Spleen (tissue), 13 donors: ENCODE measurements at regions of chr6 and their contacts with region 1.

Region 1: DNA sequence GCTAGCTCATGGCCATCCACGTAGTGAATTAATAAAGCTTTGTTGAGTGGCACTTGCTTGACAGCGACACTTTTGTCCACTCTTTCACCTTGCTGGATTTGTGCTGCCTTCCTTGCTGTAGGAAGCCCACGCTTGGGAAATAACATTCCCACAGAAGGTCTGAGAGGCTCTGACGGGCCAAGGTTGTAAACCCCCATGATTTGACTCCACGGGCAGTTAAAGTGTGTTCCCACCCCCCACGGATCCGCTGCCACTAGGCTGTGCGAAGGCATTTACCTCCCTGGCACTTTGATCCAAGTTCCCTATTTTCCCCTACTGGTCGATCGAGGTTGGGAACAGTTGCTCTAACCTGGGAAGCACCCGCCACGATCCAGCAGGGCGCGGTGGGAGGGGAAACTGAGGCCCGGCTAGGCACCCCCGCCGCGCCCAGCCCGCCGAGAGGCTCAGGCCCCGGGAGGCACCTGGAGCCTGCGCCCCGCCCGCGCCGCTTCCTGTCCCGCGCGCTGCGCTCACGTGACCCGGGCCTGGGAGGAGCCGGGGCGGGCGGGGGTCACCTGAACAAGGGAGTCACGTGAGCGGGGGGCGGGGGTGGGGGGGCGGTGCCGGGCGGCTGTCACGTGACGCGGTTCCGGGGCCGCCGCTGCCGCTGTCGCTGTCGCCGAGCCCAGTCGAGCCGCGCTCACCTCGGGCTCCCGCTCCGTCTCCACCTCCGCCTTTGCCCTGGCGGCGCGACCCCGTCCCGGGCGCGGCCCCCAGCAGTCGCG is at the start of gene IGF2R:
- DNase-seq: peak; percentile 99
- H3K4me3 ChIP-seq: peak within 1 kb of the TSS; percentile 68 to 98 (median 90)
- H3K27ac ChIP-seq: peak within 1 kb of the TSS; percentile 87 to 98 (median 94)
- H3K4me1 ChIP-seq: peaks cover 26 to 73% (median 47%) of the 10 kb centered on the region in 6 donors
- H3K27me3 ChIP-seq: no peaks in the 10 kb centered on the region
- CTCF ChIP-seq: peak in 2 of 11 experiments; percentile 31 to 40
- POLR2A ChIP-seq: peak in 1 of 3 donors; percentile 76
- total RNA-seq, gene IGF2R: 110 to 193 (median 164) TPM

Region 2: GRCh38 chr6:159789377-159790148 is 179.1 kb before region 1 on chr6 and contains the start of gene TCP1:
- intact Hi-C with region 1: loop called (anchors 10 kb)
- DNase-seq: peak; percentile 99
- H3K4me3 ChIP-seq: peak within 1 kb of the TSS; percentile 88 to 98 (median 93)
- H3K27ac ChIP-seq: peak within 1 kb of the TSS; percentile 85 to 99 (median 97)
- H3K4me1 ChIP-seq: peaks cover 28 to 84% (median 62%) of the 10 kb centered on the region in 6 donors
- H3K27me3 ChIP-seq: no peaks in the 10 kb centered on the region
- CTCF ChIP-seq: peak in 3 of 11 experiments; percentile 5 to 26 (median 17)
- POLR2A ChIP-seq: peak in 2 of 3 donors; percentile 81 to 93
- total RNA-seq, gene TCP1: 94.1 to 136 (median 119) TPM

Region 3: DNA sequence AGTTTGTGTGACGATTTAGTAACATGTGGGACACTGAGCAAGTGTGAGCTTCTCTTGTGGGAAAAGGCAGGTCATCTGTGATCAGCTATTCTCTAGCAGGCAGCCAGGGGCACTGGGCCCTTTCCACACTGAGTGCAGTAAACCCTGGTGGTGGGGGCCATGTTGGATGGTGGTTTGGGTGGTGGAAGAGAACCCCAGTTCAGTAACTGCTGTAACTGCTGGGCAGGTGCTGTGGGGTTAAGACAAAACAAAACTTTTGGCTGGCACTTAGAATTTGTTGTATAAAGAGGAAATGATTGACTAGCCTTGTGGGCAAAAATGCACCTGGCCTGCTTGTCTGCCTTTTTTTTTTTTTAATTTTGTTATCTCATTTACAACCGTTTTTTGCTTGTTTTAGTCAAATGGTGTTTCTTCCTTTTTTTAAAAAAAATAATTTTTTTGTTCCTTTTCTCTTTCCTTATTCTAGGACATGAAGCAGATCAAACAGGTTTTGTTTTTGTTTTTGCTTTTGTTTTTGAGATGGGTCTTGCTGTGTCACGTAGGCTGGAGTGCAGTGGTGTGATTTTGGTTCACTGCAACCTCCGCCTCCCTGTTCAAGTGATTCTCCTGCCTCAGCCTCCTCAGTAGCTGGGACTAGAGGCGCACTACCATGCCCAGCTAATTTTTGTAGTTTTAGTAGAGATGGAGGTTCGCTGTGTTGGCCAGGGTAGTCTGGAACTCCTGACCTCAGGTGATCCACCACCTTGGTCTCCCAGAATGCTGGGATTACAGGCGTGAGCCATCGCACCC is 60.1 kb after region 1 on chr6:
- intact Hi-C with region 1: loop called (anchors 10 kb)
- DNase-seq: no peak
- H3K4me3 ChIP-seq: no peak overlapping the region
- H3K27ac ChIP-seq: peak overlapping the region in 2 of 8 donors; percentile 5 to 64
- H3K4me1 ChIP-seq: peaks cover 0 to 14% (median 3%) of the 10 kb centered on the region in 6 donors
- H3K27me3 ChIP-seq: no peaks in the 10 kb centered on the region
- CTCF ChIP-seq: no peak
- POLR2A ChIP-seq: no peak